Ovary (tissue), 10 donors: ENCODE measurements at regions of chr13 and their contacts with region 1.

Region 1: GRCh38 chr13:112839356-112840105 is 129.5 kb upstream of the MCF2L start:
- DNase-seq: no peak
- H3K4me3 ChIP-seq: no peak overlapping the region
- H3K27ac ChIP-seq: no peak overlapping the region
- H3K4me1 ChIP-seq: no peaks in the 10 kb centered on the region
- H3K27me3 ChIP-seq: no peaks in the 10 kb centered on the region
- CTCF ChIP-seq: no peak
- EP300 ChIP-seq: no peak
- POLR2A ChIP-seq: no peak

Region 2: GRCh38 chr13:112814905-112815585 is 24.5 kb before region 1 on chr13:
- intact Hi-C with region 1: no loop called
- DNase-seq: no peak
- H3K4me3 ChIP-seq: no peak overlapping the region
- H3K27ac ChIP-seq: no peak overlapping the region
- H3K4me1 ChIP-seq: no peaks in the 10 kb centered on the region
- H3K27me3 ChIP-seq: no peaks in the 10 kb centered on the region
- CTCF ChIP-seq: no peak
- EP300 ChIP-seq: no peak
- POLR2A ChIP-seq: no peak

Region 3: GRCh38 chr13:112859817-112860190 is 20.3 kb after region 1 on chr13:
- intact Hi-C with region 1: loop called in 1 of 4 experiments (anchors 2 kb)
- DNase-seq: no peak
- H3K4me3 ChIP-seq: no peak overlapping the region
- H3K27ac ChIP-seq: no peak overlapping the region
- H3K4me1 ChIP-seq: no peaks in the 10 kb centered on the region
- H3K27me3 ChIP-seq: no peaks in the 10 kb centered on the region
- CTCF ChIP-seq: no peak
- EP300 ChIP-seq: no peak
- POLR2A ChIP-seq: no peak